Naive thymus-derived CD4-positive, alpha-beta T cell (primary cell): ENCODE measurements at regions of chr17 and their contacts with region 1.

Region 1: GRCh38 chr17:75632863-75633485 is at the start of gene SMIM5:
- DNase-seq: peak; percentile 62 to 85 (median 80)
- ATAC-seq: peak; percentile 93
- H3K4me3 ChIP-seq: no peak within 1 kb of the TSS
- H3K4me3 Mint-ChIP-seq: peak within 1 kb of the TSS in 2 of 10 donors; percentile 19 to 21
- H3K27ac ChIP-seq: no peak within 1 kb of the TSS
- H3K27ac Mint-ChIP-seq: peak within 1 kb of the TSS in 3 of 9 donors; percentile 12 to 43 (median 35)
- H3K4me1 ChIP-seq: peaks cover 0 to 8% of the 10 kb centered on the region in 2 donors
- H3K4me1 Mint-ChIP-seq: peaks cover 3 to 14% (median 7%) of the 10 kb centered on the region in 7 donors
- H3K27me3 ChIP-seq: no peaks in the 10 kb centered on the region
- H3K27me3 Mint-ChIP-seq: no peaks in the 10 kb centered on the region
- total RNA-seq, gene SMIM5: 0.43 to 2.4 (median 0.84) TPM

Region 2: DNA sequence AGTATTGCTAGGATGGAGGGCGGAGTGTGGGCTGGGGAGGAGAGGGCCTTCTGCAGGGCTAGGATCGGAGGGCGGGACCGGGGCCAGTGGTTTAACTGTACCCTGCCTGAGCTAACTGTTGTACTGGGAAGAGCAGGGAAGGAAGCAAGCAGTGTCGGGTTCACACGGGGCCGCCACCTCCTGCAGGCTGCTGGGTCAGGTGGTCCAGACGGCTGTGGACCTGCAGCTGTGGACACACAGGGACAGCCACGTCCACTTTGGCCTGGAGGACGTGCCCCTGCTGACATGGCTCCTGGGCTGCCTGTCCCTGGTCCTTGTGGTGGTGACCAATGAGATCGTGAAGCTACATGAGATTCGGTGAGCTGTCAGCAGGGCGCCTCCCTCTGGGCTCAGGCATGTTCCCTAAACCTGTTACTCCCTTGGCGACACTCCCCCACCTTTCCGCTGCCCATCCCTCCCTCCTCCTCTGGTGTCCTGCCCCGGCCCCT is 134.2 kb before region 1 on chr17:
- CTCF ChIA-PET with region 1: no interaction called
- POLR2A ChIA-PET with region 1: no interaction called
- intact Hi-C with region 1: no loop called
- DNase-seq: no peak
- ATAC-seq: no peak
- H3K4me3 ChIP-seq: no peak overlapping the region
- H3K4me3 Mint-ChIP-seq: no peak overlapping the region
- H3K27ac ChIP-seq: no peak overlapping the region
- H3K27ac Mint-ChIP-seq: no peak overlapping the region
- H3K4me1 ChIP-seq: peaks cover 0 to 7% of the 10 kb centered on the region in 2 donors
- H3K4me1 Mint-ChIP-seq: peaks cover 0 to 11% (median 7%) of the 10 kb centered on the region in 7 donors
- H3K27me3 ChIP-seq: no peaks in the 10 kb centered on the region
- H3K27me3 Mint-ChIP-seq: no peaks in the 10 kb centered on the region

Region 3: DNA sequence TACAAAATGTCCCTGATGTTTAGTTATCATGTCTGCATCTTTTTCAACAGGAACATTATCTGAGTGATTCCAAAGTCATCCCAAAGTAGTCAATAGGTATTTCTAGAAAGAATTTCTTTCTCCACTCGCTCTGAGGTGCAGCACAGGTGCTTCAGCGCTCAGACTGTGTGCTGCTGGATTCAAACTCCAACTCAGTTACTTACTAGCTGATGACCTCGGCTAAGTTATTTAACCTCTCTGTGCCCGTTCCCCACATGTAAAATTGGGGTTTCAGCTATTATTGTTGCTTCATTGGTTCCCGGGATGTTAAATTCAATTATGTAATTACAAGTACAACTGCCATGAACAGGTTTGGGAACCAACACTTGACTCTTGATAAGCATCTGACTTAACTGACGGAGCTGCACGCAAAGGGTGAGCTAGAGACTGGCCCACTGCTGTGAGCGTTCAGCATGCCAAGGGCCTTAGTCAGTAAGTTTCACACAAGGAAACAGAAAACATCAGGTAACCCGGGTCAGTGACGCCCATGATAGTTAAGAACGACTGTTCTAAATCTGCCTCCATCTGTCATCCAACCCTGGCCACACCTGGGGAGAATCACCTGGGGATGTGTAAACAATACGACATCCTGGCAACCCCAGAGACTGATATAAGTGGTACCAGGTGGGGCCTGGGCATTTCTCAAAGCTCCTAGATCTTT is 12.4 kb after region 1 on chr17:
- CTCF ChIA-PET with region 1: interaction called, 13 read pairs
- POLR2A ChIA-PET with region 1: interaction called, 3 read pairs
- intact Hi-C with region 1: no loop called
- DNase-seq: no peak
- ATAC-seq: no peak
- H3K4me3 ChIP-seq: no peak overlapping the region
- H3K4me3 Mint-ChIP-seq: no peak overlapping the region
- H3K27ac ChIP-seq: no peak overlapping the region
- H3K27ac Mint-ChIP-seq: peak overlapping the region in 4 of 9 donors; percentile 12 to 82 (median 38)
- H3K4me1 ChIP-seq: no peaks in the 10 kb centered on the region
- H3K4me1 Mint-ChIP-seq: peaks cover 0 to 14% (median 6%) of the 10 kb centered on the region in 7 donors
- H3K27me3 ChIP-seq: no peaks in the 10 kb centered on the region
- H3K27me3 Mint-ChIP-seq: no peaks in the 10 kb centered on the region

Region 4: GRCh38 chr17:75658237-75658636 is 25.3 kb after region 1 on chr17:
- CTCF ChIA-PET with region 1: interaction called, 10 read pairs
- POLR2A ChIA-PET with region 1: no interaction called
- intact Hi-C with region 1: no loop called
- DNase-seq: no peak
- ATAC-seq: no peak
- H3K4me3 ChIP-seq: no peak overlapping the region
- H3K4me3 Mint-ChIP-seq: no peak overlapping the region
- H3K27ac ChIP-seq: no peak overlapping the region
- H3K27ac Mint-ChIP-seq: no peak overlapping the region
- H3K4me1 ChIP-seq: no peaks in the 10 kb centered on the region
- H3K4me1 Mint-ChIP-seq: peaks cover 0 to 7% (median 0%) of the 10 kb centered on the region in 7 donors
- H3K27me3 ChIP-seq: no peaks in the 10 kb centered on the region
- H3K27me3 Mint-ChIP-seq: no peaks in the 10 kb centered on the region

Region 5: GRCh38 chr17:76063875-76064546 is 431.0 kb after region 1 on chr17:
- CTCF ChIA-PET with region 1: no interaction called
- POLR2A ChIA-PET with region 1: no interaction called
- intact Hi-C with region 1: no loop called
- DNase-seq: peak in 7 of 9 donors; percentile 28 to 76 (median 44)
- ATAC-seq: peak; percentile 95
- H3K4me3 ChIP-seq: no peak overlapping the region
- H3K4me3 Mint-ChIP-seq: peak overlapping the region; percentile 12 to 77 (median 68)
- H3K27ac ChIP-seq: peak overlapping the region; percentile 52
- H3K27ac Mint-ChIP-seq: peak overlapping the region; percentile 82 to 97 (median 91)
- H3K4me1 ChIP-seq: no peaks in the 10 kb centered on the region
- H3K4me1 Mint-ChIP-seq: peaks cover 10 to 30% (median 17%) of the 10 kb centered on the region in 7 donors
- H3K27me3 ChIP-seq: no peaks in the 10 kb centered on the region
- H3K27me3 Mint-ChIP-seq: no peaks in the 10 kb centered on the region